Activated B cell treated with CpG ODN at 0.5 μM for 24 hours (primary cell): ENCODE measurements at regions of chr7 and their contacts with region 1.

Region 1: DNA sequence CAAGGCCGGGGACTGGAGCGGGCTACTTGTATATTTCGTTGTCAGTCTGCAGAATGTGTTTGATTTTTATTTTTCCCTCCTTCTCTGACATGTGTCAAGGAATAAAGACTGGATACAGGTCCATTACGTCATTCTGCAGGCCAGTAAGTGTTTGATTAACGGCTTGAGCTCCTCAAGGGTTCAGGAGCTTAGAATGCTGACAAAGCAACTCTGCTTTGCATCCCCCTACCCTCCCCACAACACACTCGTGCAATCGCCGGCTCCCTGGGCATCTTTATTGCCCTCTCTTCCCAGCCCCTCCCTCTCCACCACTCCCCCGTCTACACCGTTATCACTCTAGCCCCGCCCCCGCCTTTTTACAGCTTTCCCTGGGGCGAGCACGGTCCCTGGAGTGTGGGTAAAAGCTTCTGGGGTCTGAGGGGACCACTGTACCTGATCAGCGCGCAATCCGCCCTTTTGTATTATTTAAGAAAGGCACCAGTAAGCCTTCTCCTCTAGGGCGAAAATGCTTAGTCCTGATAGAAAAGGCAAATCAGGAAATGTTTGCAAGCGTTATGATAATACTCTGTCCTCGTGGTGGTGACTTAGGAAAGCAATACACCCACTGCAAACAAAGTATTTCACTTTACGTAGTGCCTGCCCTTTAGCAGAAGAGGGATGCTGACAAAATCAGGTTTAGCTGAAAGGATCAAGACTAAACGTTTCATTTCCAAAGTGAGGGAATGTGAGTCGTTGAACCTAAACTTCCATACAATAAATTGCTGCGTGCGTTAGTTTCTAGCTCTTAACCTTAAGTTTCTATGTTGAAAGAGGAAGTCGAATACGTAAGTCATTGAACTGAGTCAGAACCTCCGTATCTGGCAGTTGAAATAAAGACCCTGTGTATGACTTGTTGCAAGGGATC is 1.4 kb upstream of the CREB5 start:
- DNase-seq: peak; percentile 24
- ATAC-seq: peak; percentile 61
- H3K4me3 Mint-ChIP-seq: peak overlapping the region; percentile 81
- H3K27ac Mint-ChIP-seq: no peak overlapping the region
- H3K4me1 Mint-ChIP-seq: peaks cover 37% of the 10 kb centered on the region
- H3K27me3 Mint-ChIP-seq: peaks cover 48% of the 10 kb centered on the region
- CTCF ChIP-seq: no peak

Region 2: DNA sequence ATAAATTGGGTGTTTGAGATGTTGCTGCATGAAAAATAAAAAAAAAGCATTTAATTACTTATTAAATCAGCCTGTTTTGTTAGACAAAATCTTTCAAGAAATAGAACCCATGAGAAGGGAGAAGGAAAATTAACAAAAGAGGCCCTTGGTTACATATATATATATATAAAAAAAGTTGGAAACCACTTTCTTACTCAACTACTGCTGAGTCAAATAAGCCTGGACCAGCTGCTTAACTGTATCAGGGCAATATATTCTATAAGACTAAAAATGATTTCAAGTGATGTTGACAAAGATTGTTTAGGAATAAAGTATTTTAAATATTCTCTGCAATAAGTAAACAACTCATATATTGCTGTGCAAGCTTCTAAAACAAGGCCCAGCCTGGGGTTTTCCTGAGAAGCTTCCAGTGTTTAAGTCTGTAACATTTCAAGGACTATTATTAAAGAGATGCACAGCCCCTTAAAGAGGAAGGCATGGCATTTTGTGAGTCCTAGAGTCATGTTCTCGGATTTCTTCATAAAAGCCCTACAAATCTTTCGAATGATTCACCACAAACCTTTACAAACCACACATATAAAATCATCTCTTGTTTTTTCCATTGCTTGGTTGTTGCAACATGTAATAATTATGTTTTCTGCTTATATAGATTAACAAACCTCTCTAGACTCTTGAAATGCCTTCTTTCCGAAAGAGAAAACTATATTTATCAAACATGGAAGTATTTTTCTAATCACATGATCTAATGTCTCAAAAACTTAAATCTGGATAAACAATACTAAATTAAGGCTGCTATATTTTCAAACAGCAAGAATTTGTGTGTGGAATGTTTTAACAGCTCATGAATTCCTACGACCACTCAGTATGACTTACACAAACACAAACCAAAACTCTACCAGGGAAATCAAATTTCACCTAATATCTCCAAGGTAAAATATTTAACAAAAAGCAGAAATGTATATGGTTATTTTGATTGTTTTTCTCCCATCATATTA is 244.6 kb before region 1 on chr7:
- CTCF ChIA-PET with region 1: no interaction called
- POLR2A ChIA-PET with region 1: no interaction called
- intact Hi-C with region 1: loop called (anchors 5 kb)
- DNase-seq: no peak
- ATAC-seq: no peak
- H3K4me3 Mint-ChIP-seq: peak overlapping the region; percentile 59
- H3K27ac Mint-ChIP-seq: peak overlapping the region; percentile 85
- H3K4me1 Mint-ChIP-seq: peaks cover 95% of the 10 kb centered on the region
- H3K27me3 Mint-ChIP-seq: no peaks in the 10 kb centered on the region
- CTCF ChIP-seq: no peak

Region 3: DNA sequence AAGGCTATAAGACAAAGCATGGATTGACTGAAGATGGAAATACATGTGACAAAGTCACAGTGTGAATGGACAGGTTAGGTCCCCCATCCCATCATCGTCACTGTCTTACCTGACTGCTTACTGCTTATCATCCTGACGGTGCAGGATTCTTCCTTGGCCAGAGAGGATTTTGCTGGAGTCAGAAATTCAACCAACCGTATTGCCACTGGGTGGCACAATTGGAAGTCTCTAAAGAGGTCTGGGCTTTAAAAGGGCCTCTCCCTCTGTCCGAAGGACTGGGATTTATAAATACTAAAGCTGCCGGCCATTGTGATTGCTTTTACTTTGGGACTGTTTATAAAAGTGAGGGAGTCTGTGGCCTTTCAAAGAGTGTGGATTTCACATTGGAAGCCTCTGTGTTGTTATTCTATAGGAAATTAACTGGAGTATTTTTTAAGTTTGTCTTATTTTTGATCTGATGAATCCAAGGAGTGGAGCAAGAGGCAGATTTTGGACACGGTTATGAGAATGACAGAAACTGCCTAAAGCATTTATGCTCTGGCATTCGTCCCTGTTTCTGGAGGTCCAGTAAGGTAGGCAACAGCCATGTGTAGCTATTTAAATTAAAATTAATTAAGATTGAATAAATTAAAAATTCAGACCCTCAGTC is 111.9 kb before region 1 on chr7:
- CTCF ChIA-PET with region 1: no interaction called
- POLR2A ChIA-PET with region 1: no interaction called
- intact Hi-C with region 1: no loop called
- DNase-seq: no peak
- ATAC-seq: no peak
- H3K4me3 Mint-ChIP-seq: no peak overlapping the region
- H3K27ac Mint-ChIP-seq: no peak overlapping the region
- H3K4me1 Mint-ChIP-seq: peaks cover 14% of the 10 kb centered on the region
- H3K27me3 Mint-ChIP-seq: no peaks in the 10 kb centered on the region
- CTCF ChIP-seq: no peak

Region 4: DNA sequence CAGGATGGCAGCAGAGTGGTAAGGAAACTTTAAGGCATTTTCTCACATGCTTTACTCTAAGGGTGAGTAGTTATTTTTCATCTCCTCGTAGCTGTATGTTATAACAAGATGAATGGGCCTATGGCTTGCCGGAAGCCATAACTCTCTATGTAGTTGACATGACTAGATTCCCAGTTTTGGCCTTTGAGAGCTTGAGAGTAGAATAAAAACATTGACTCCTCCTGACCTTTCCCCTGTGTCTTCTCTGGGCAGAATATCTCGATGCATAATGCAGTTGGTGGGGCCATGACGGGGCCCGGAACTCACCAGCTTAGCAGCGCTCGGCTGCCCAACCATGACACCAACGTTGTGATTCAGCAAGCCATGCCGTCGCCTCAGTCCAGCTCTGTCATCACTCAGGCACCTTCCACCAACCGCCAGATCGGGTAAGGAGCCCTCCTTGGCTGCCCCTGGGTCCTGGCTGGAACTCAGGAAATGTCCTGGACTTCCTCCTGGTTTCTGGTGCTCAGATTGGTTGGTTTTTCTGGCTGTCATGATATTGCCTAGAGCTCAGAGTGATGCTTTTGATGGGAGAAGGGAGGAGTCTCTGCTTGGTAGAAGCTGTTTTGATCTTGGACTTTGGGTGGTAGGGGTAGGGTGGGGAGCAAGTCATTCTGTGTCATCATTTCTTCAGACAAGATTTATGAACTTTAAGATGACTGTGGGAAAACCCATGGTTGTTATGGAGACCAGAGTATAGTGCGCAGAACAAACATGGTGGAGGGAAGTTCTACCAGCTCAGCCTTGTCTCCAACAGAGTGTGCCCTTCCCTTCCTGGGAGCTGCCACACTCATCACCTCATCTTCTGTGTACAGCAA is 159.5 kb after region 1 on chr7:
- CTCF ChIA-PET with region 1: no interaction called
- POLR2A ChIA-PET with region 1: no interaction called
- intact Hi-C with region 1: loop called (anchors 2 kb)
- DNase-seq: peak; percentile 22
- ATAC-seq: peak; percentile 94
- H3K4me3 Mint-ChIP-seq: peak overlapping the region; percentile 29
- H3K27ac Mint-ChIP-seq: no peak overlapping the region
- H3K4me1 Mint-ChIP-seq: peaks cover 28% of the 10 kb centered on the region
- H3K27me3 Mint-ChIP-seq: peaks cover 11% of the 10 kb centered on the region
- CTCF ChIP-seq: no peak